ENCODE measurements at regions of chr15 and their contacts with region 1.

Region 1: DNA sequence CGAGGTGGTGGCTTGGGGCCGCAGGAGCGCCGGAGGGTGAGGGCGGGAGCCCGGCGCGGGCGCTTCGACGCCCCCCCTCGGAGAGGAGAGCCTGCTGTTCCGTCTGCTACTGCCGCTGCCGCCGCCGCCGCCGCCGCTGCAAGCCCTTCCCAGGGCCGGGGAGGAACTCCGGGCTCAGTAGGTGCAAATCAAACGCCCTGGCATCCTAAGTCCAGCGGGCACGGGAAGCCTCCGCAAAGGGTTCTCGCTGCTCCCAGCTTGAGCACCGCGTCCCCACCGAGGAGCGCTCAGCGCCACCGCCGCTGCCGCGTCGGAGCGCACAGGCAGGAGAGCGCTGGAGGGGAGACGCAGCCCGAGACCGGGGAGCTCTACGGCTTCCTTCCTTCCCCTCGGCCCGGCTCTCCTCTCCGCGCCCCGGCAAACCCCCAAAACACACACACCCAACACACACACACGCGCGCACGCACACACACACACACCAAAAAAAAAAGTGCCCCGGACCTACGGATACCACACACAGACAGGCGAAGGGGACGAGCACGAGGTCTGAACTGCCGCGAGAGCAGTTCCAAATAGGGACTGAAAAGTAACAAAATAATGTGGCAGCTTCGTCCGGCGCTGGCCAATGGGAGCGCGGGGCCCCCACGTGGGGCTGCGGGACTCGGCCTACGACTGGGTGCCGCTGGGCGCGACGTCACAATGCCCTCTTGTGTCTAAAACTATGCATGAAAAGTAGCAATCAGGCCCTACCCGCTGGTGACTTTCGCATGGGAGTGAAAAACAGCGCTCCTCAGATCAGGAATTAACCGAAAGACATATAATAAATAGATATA is at the start of gene TLE3:
- DNase-seq: peak; percentile 99
- H3K4me3 Mint-ChIP-seq: peak within 1 kb of the TSS; percentile 100
- H3K27ac Mint-ChIP-seq: peak within 1 kb of the TSS; percentile 99
- H3K4me1 Mint-ChIP-seq: peaks cover 43% of the 10 kb centered on the region
- H3K27me3 Mint-ChIP-seq: peaks cover 16% of the 10 kb centered on the region
- total RNA-seq, gene TLE3: 111 and 118 TPM in 2 replicates

Region 2: GRCh38 chr15:69452692-69453521 is 644.6 kb before region 1 on chr15 and contains the start of gene RPLP1:
- intact Hi-C with region 1: loop called (anchors 2 kb)
- DNase-seq: peak; percentile 99
- H3K4me3 Mint-ChIP-seq: peak within 1 kb of the TSS; percentile 99
- H3K27ac Mint-ChIP-seq: peak within 1 kb of the TSS; percentile 100
- H3K4me1 Mint-ChIP-seq: peaks cover 35% of the 10 kb centered on the region
- H3K27me3 Mint-ChIP-seq: no peaks in the 10 kb centered on the region
- total RNA-seq, gene RPLP1: 1,827 and 1,829 TPM in 2 replicates

Region 3: GRCh38 chr15:69576035-69576526 is 521.5 kb before region 1 on chr15:
- intact Hi-C with region 1: loop called (anchors 2 kb)
- DNase-seq: peak; percentile 87
- H3K4me3 Mint-ChIP-seq: no peak overlapping the region
- H3K27ac Mint-ChIP-seq: peak overlapping the region; percentile 30
- H3K4me1 Mint-ChIP-seq: peaks cover 39% of the 10 kb centered on the region
- H3K27me3 Mint-ChIP-seq: peaks cover 9% of the 10 kb centered on the region

Region 4: DNA sequence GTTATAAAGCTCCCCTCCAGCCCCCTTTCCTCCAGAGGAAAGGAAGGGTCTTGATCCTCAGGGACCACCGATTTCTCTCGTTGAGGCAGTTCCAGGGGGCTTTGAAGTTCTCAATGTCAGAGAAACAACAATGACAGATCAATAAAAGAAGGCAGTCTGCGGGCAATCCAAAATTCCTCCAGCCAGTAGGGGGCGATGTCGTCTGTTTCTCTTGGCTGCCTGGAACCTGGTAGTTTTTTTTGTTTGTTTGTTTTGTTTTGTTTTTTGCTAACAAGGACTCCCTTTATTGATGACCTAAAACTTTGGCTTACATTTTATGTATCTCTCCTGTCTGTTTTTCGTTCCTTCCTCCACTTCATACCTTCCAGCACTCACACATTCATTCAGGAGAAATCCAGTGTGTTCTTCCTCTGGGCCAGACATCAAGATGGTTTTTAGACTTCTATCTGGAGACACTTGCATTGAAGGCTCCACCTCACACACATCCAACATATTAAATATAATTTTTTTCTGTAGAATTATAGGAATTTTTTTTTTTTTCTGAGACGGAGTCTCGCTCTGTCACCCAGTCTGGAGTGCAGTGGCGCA is 368.3 kb before region 1 on chr15:
- intact Hi-C with region 1: loop called (anchors 5 kb)
- DNase-seq: peak; percentile 92
- H3K4me3 Mint-ChIP-seq: no peak overlapping the region
- H3K27ac Mint-ChIP-seq: peak overlapping the region; percentile 12
- H3K4me1 Mint-ChIP-seq: peaks cover 58% of the 10 kb centered on the region
- H3K27me3 Mint-ChIP-seq: peaks cover 14% of the 10 kb centered on the region

Region 5: DNA sequence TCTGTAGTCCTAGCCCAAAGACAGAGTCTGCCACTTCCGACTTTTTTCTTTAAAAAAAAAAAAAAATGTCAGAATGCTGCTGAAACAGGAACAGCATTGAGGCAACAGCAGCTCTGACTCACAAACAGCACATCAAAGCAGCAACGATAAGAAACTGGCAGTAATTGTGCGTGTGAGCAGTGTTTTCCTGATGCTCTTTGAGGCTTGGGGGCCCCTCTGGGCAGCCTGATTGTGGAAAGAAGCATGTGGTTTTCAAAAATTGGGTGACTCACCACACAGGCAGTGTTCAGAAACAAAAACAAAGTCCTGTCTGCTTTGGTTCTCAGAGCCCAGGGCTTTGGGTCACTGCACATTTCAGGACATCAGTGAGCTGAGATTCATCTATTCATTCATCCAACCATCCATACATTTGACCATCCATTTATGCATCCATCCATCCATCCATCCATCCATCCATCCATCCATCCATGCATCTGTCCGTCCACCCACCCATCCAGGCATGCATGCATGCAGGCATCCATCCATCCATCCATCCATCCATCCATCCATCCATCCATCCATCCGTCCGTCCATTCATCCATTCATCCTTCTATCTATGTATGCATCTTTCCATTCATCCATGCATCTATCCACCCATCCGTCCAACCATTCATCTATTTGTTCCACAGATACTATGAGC is 336.5 kb before region 1 on chr15:
- intact Hi-C with region 1: loop called (anchors 1 kb)
- DNase-seq: peak; percentile 95
- H3K4me3 Mint-ChIP-seq: peak overlapping the region; percentile 76
- H3K27ac Mint-ChIP-seq: peak overlapping the region; percentile 87
- H3K4me1 Mint-ChIP-seq: peaks cover 77% of the 10 kb centered on the region
- H3K27me3 Mint-ChIP-seq: peaks cover 2% of the 10 kb centered on the region

Region 6: DNA sequence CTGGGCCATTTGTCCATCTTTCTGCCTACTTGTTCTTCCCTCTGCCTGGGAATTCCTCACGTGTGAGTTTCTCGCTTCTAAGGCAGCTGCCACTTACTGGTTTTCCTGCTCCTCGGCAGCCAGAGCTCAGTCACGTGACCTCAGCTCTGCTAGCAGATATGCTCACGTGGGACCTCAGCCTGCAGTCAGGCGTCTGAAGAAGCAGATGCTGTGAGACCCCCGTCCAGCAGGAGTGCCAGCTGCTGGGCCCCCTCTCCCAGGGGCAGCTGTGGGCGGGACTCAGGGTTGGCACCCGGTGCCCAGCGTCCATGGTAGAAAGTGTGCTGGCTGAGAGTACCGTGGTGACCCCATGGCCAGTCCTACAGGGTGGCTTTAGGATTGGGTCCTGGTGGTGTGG is 161.5 kb after region 1 on chr15:
- intact Hi-C with region 1: loop called (anchors 5 kb)
- DNase-seq: peak; percentile 83
- H3K4me3 Mint-ChIP-seq: peak overlapping the region; percentile 51
- H3K27ac Mint-ChIP-seq: no peak overlapping the region
- H3K4me1 Mint-ChIP-seq: peaks cover 48% of the 10 kb centered on the region
- H3K27me3 Mint-ChIP-seq: peaks cover 35% of the 10 kb centered on the region

Measured in activated CD4-positive, alpha-beta T cell treated with anti-CD3 and anti-CD28 coated beads, Interleukin-2, amount 10 ng/mL, durations not matched to agents 24 days and 14 days (primary cell).